ENCODE measurements at regions of chr6 and their contacts with region 1.

Region 1: GRCh38 chr6:121436960-121437850 is 1.8 kb downstream of the GJA1 start:
- DNase-seq: peak; percentile 68
- H3K4me3 ChIP-seq: peak overlapping the region; percentile 75
- H3K27ac ChIP-seq: peak overlapping the region; percentile 81
- H3K4me1 ChIP-seq: peaks cover 51% of the 10 kb centered on the region
- H3K27me3 ChIP-seq: no peaks in the 10 kb centered on the region
- CTCF ChIP-seq: no peak

Region 2: GRCh38 chr6:121000381-121000780 is 436.8 kb before region 1 on chr6:
- CTCF ChIA-PET with region 1: no interaction called
- POLR2A ChIA-PET with region 1: no interaction called
- intact Hi-C with region 1: no loop called
- DNase-seq: peak; percentile 13
- H3K4me3 ChIP-seq: no peak overlapping the region
- H3K27ac ChIP-seq: no peak overlapping the region
- H3K4me1 ChIP-seq: no peaks in the 10 kb centered on the region
- H3K27me3 ChIP-seq: no peaks in the 10 kb centered on the region
- CTCF ChIP-seq: no peak

Region 3: DNA sequence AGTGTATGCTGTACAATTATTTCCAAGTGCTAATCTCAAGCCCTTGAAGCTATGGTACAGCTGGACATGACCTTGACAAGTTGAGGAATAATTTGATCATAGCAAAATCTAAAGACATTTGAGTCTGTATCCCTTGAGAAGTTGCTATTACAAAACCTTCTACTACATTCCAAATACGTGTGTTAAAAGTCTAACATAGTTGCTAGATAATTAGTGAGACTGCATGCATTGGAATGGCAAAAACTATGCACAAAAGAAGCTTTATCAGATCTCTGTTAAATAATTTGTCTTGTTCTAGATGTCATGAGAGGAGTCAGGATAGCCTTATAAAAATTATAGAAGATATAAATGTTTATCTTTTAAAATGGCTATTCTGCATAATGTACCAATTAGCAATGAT is 126.1 kb after region 1 on chr6:
- CTCF ChIA-PET with region 1: no interaction called
- POLR2A ChIA-PET with region 1: no interaction called
- intact Hi-C with region 1: loop called (anchors 2 kb)
- DNase-seq: no peak
- H3K4me3 ChIP-seq: no peak overlapping the region
- H3K27ac ChIP-seq: no peak overlapping the region
- H3K4me1 ChIP-seq: peaks cover 16% of the 10 kb centered on the region
- H3K27me3 ChIP-seq: no peaks in the 10 kb centered on the region
- CTCF ChIP-seq: no peak

Region 4: DNA sequence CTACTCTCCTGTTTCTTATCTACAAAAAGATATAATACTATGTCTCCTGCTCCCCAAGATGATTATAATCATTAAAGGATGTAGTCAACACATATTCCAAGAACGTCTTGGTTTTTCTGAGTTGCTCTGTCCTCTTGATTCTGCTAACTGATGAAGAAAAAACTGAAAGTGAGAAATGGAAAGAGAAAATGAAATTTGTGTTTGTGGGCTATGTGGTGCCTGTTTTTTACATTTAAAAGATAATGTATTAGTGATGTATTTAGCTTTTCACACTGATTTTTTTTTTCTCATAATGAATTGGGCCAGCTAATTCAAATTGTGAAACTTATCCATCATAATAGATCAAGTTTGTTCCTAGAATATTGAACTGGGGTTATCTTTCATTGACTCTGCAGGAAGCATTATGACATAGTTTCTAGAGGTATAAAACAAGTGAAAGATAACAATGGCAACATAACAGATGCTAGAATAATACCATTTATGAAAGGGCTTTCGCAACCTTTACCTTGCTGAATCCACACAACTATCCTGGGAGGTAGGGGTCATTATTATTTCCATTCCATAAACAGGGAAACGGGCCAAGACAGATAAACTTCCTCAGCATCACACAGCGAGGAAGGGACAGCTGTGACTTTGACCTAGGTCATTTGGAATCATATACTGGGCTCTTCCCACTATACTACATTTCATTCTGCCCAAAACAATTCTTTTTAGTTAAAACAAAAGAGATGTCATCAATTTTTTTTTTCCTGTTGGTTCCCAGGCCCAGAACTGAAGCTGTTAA is 334.9 kb after region 1 on chr6:
- CTCF ChIA-PET with region 1: no interaction called
- POLR2A ChIA-PET with region 1: interaction called, 15 read pairs
- intact Hi-C with region 1: no loop called
- DNase-seq: no peak
- H3K4me3 ChIP-seq: no peak overlapping the region
- H3K27ac ChIP-seq: no peak overlapping the region
- H3K4me1 ChIP-seq: no peaks in the 10 kb centered on the region
- H3K27me3 ChIP-seq: no peaks in the 10 kb centered on the region
- CTCF ChIP-seq: no peak

Measured in A673 (cell line).